Uterus (tissue), 4 donors: ENCODE measurements at regions of chr12 and their contacts with region 1.

Region 1: DNA sequence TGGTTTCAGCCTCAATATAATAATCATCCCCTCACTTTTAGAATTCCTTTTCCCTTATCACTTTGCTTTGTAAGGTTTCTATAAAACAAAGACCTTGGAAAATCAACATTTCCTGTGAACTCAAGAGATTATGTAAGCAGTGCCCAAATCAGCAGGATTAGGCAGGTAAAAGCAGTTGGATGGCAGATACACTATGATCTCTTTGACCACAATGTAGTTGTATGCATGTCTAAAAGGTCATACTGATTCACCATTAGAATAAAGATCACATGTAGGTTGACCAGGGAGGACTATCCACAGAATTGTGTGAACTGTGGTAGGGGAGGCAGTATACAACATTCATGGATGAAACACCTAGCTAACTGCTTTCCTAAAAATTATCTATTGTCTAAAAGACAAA is 57.5 kb downstream of the DENND5B start:
- DNase-seq: no peak
- H3K4me3 ChIP-seq: no peak overlapping the region
- H3K27ac ChIP-seq: no peak overlapping the region
- H3K4me1 ChIP-seq: no peaks in the 10 kb centered on the region
- H3K27me3 ChIP-seq: no peaks in the 10 kb centered on the region
- CTCF ChIP-seq: no peak
- POLR2A ChIP-seq: no peak

Region 2: DNA sequence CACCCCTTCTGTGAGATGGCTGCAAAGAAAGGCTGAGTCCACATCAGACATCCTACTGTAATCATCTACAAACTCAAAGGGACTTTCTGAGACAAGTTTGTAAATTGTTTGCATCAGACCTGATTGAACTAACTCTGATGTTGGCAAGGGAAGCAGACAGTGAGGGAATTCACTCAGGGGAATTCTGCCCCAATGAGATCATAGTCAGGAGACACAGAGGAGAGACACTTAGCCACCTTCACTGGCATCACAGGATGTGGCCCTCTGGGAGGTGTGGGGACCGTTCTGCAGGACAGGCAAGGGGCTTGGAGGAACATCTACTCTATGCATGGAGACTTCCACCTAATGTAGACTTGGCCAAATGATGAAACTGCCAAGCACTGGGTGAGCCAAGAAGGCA is 530.5 kb before region 1 on chr12:
- intact Hi-C with region 1: no loop called
- DNase-seq: no peak
- H3K4me3 ChIP-seq: no peak overlapping the region
- H3K27ac ChIP-seq: no peak overlapping the region
- H3K4me1 ChIP-seq: no peaks in the 10 kb centered on the region
- H3K27me3 ChIP-seq: no peaks in the 10 kb centered on the region
- CTCF ChIP-seq: no peak
- POLR2A ChIP-seq: no peak

Region 3: GRCh38 chr12:31431721-31432240 is 101.7 kb before region 1 on chr12:
- intact Hi-C with region 1: no loop called
- DNase-seq: no peak
- H3K4me3 ChIP-seq: no peak overlapping the region
- H3K27ac ChIP-seq: no peak overlapping the region
- H3K4me1 ChIP-seq: no peaks in the 10 kb centered on the region
- H3K27me3 ChIP-seq: no peaks in the 10 kb centered on the region
- CTCF ChIP-seq: no peak
- POLR2A ChIP-seq: no peak

Region 4: GRCh38 chr12:31471823-31472222 is 61.6 kb before region 1 on chr12:
- intact Hi-C with region 1: no loop called
- DNase-seq: no peak
- H3K4me3 ChIP-seq: no peak overlapping the region
- H3K27ac ChIP-seq: no peak overlapping the region
- H3K4me1 ChIP-seq: no peaks in the 10 kb centered on the region
- H3K27me3 ChIP-seq: no peaks in the 10 kb centered on the region
- CTCF ChIP-seq: no peak
- POLR2A ChIP-seq: no peak

Region 5: GRCh38 chr12:31482816-31483215 is 50.7 kb before region 1 on chr12:
- intact Hi-C with region 1: loop called (anchors 2 kb)
- DNase-seq: no peak
- H3K4me3 ChIP-seq: no peak overlapping the region
- H3K27ac ChIP-seq: no peak overlapping the region
- H3K4me1 ChIP-seq: no peaks in the 10 kb centered on the region
- H3K27me3 ChIP-seq: no peaks in the 10 kb centered on the region
- CTCF ChIP-seq: no peak
- POLR2A ChIP-seq: no peak